Transverse colon (tissue), 4 donors: ENCODE measurements at regions of chr9 and their contacts with region 1.

Region 1: DNA sequence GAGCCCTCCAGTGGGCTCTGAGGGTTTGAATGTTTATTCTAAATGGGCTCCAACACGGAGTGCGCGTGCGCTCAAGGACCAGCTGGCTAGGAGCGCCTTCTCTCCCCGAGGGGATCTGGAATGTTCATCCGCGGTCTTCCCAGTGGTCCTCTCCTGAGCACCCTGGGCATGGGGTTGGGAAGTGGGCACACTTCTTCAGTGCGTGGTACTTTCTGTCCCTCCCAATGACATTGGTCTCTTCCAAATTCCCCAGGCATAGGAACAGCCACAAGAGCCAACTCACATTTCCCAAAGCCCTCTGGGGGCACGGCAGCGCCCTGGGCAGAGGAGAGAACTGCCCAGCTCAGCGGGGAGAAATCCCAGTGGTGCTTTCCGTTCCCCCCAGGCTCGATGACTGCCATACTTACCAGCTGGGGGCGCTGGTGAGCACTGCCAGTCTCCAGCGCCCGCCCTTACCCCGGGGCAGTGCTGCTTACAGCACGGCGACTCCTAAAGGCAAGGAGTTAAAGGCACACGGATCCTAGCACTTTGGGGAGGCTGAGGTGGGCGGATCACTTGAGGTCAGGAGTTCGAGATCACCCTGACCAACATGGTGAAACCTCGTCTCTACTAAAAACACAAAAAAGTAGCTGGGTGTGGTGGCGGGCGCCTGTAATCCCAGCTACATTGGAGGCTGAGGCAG is 29.9 kb upstream of the OBP2B start:
- DNase-seq: peak; percentile 87
- H3K4me3 ChIP-seq: peak overlapping the region in 3 of 4 donors; percentile 12 to 45 (median 26)
- H3K27ac ChIP-seq: peak overlapping the region; percentile 66 to 80 (median 75)
- H3K4me1 ChIP-seq: peaks cover 10 to 34% (median 19%) of the 10 kb centered on the region in 4 donors
- H3K27me3 ChIP-seq: no peaks in the 10 kb centered on the region
- CTCF ChIP-seq: peak; percentile 67 to 95 (median 89)
- EP300 ChIP-seq: no peak
- POLR2A ChIP-seq: peak; percentile 12

Region 2: GRCh38 chr9:132862533-132862932 is 376.5 kb before region 1 on chr9:
- in situ Hi-C with region 1: no loop called
- intact Hi-C with region 1: no loop called
- DNase-seq: no peak
- H3K4me3 ChIP-seq: no peak overlapping the region
- H3K27ac ChIP-seq: no peak overlapping the region
- H3K4me1 ChIP-seq: peaks cover 0 to 10% (median under 1%) of the 10 kb centered on the region in 4 donors
- H3K27me3 ChIP-seq: no peaks in the 10 kb centered on the region
- CTCF ChIP-seq: no peak
- EP300 ChIP-seq: no peak
- POLR2A ChIP-seq: no peak

Region 3: DNA sequence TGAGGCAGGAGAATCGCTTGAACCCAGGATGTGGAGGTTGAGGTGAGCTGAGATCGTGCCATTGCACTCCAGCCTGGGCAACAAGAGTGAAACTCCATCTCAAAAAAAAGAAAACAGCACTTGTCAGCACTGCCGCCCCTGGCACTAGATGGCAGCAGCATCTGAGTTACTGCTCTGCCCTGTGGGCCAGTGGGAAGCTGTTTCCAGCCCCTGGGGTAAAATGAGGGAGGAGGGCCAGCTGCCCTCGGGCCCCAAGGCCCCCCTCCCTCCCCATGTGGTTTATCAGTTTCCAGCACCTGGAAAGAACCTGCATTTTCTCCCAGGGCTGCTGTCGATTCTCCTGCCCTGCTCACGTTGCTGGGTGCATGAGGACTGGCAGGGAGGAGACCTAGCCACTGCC is 190.4 kb before region 1 on chr9:
- in situ Hi-C with region 1: no loop called
- intact Hi-C with region 1: no loop called
- DNase-seq: peak; percentile 31
- H3K4me3 ChIP-seq: no peak overlapping the region
- H3K27ac ChIP-seq: no peak overlapping the region
- H3K4me1 ChIP-seq: peaks cover 6 to 15% (median 10%) of the 10 kb centered on the region in 4 donors
- H3K27me3 ChIP-seq: no peaks in the 10 kb centered on the region
- CTCF ChIP-seq: peak in 4 of 5 experiments; percentile 23 to 32 (median 28)
- EP300 ChIP-seq: no peak
- POLR2A ChIP-seq: no peak

Region 4: DNA sequence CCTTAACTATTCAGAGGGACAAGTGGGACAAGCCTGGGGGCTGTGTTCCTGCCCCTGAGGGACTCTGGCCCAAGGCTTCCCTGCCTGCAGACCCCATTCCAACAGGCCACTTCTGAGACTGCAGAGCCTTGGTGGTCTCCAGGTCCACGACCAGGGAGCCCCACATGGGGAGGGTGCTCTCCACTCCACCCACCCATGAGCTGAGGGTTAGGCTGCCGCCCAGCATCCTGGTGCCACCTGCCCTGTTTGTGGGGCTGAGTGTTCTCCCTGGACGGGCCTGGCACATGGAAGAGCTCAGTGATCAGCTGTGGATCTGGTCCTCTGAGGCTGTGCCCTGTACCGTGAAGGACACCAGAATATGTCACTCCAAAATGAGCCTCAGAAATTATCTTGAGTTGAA is 38.5 kb after region 1 on chr9:
- in situ Hi-C with region 1: no loop called
- intact Hi-C with region 1: loop called (anchors 1 kb)
- DNase-seq: peak; percentile 2
- H3K4me3 ChIP-seq: no peak overlapping the region
- H3K27ac ChIP-seq: no peak overlapping the region
- H3K4me1 ChIP-seq: peaks cover 8 to 39% (median 28%) of the 10 kb centered on the region in 4 donors
- H3K27me3 ChIP-seq: peaks cover 18% of the 10 kb centered on the region
- CTCF ChIP-seq: no peak
- EP300 ChIP-seq: no peak
- POLR2A ChIP-seq: no peak

Region 5: GRCh38 chr9:133406480-133407307 is 167.7 kb after region 1 on chr9:
- in situ Hi-C with region 1: no loop called
- intact Hi-C with region 1: no loop called
- DNase-seq: peak; percentile 82
- H3K4me3 ChIP-seq: no peak overlapping the region
- H3K27ac ChIP-seq: no peak overlapping the region
- H3K4me1 ChIP-seq: no peaks in the 10 kb centered on the region
- H3K27me3 ChIP-seq: no peaks in the 10 kb centered on the region
- CTCF ChIP-seq: peak; percentile 88 to 93 (median 92)
- EP300 ChIP-seq: no peak
- POLR2A ChIP-seq: no peak